Dendritic cell treated with granulocyte-macrophage colony-stimulating factor and Interleukin-4, amounts not matched to agents 40 ng/mL and 50 ng/mL, for 4 days (primary cell): ENCODE measurements at regions of chr12 and their contacts with region 1.

Region 1: GRCh38 chr12:127108360-127109215 is 1158.4 kb upstream of the TMEM132C start:
- H3K4me3 Mint-ChIP-seq: no peak overlapping the region
- H3K27ac Mint-ChIP-seq: no peak overlapping the region
- H3K4me1 Mint-ChIP-seq: no peaks in the 10 kb centered on the region
- H3K27me3 Mint-ChIP-seq: no peaks in the 10 kb centered on the region

Region 2: DNA sequence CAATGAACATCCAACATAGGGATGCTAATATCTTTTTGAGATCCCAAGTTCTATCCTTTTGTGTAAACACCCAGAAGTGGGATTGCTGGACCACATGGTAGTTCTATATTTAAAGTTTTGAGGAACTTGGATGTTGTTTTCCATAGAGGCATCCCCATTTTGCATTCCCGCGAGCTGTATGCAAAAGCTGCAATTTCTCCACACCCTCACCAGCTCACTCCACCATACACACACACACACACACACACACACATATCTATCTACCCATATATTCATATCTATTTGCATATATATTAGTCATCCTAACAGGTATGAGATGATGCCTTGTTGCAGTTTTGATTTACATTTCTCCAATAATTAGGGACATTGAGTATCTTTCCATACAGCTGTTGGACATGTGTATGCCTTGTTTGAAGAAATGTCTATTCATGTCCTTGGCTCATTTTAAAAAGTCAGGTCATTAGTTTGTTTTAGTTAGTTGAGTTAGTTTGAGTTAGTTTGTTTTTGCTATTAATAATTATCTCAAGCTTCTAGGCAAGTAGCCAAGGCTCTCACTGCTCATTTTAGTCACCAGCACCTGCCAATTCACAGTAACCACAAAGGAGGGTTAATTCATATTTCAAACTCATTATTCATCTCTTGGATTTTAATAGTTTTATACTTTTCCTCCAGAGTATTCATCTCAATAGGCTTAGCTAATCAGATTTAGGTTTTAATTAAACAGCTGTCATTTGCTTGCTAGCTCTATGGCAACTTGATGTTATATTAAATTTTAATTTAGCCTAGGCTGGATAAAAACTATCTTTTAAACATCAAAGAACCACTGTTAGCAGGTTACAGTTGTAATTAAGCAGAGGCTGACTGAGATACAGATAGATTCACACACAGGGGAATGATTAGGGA is 277.6 kb before region 1 on chr12:
- intact Hi-C with region 1: no loop called
- H3K4me3 Mint-ChIP-seq: no peak overlapping the region
- H3K27ac Mint-ChIP-seq: no peak overlapping the region
- H3K4me1 Mint-ChIP-seq: no peaks in the 10 kb centered on the region
- H3K27me3 Mint-ChIP-seq: peaks cover 1% of the 10 kb centered on the region

Region 3: GRCh38 chr12:126960709-126961108 is 147.9 kb before region 1 on chr12:
- intact Hi-C with region 1: no loop called
- H3K4me3 Mint-ChIP-seq: no peak overlapping the region
- H3K27ac Mint-ChIP-seq: no peak overlapping the region
- H3K4me1 Mint-ChIP-seq: no peaks in the 10 kb centered on the region
- H3K27me3 Mint-ChIP-seq: no peaks in the 10 kb centered on the region

Region 4: DNA sequence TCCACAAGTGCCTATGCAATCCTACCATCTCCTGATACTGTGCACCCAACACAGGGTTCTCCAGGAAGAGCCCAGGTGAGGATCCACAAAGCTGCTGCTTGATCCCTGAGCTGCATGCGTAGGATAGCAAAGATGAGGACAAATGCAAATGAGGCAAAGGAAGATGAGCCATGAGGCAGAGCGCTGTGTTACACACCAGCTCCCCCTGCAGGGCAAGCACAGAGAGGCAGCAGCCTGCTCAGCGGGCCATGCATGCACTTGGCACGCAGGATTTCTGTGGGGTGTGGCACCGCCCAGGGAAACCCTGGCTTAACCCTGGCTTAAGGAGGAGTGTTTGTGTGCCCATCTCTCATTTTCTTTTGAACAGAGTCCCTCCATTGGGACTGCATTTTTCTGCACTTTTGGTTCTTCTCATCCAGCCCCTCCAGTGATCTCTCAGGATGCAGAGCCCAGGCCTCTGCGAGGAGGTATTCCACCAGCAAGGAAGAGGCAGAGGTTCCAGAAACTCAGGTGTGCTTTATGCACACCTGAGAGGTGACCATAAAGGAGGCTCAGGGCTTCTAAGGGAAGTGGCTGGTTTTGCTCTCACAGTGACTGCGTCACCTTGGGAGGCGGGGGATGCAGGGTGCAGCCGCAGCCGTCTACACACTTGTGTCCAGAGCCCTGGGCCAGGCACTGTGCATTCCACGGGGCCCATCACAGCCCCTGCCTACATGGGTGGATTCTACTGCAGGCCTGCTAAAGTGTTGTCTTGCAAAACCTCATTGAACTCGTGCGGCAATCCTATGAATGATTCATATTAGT is 185.1 kb after region 1 on chr12:
- intact Hi-C with region 1: loop called (anchors 1 kb)
- H3K4me3 Mint-ChIP-seq: no peak overlapping the region
- H3K27ac Mint-ChIP-seq: no peak overlapping the region
- H3K4me1 Mint-ChIP-seq: no peaks in the 10 kb centered on the region
- H3K27me3 Mint-ChIP-seq: no peaks in the 10 kb centered on the region

Region 5: DNA sequence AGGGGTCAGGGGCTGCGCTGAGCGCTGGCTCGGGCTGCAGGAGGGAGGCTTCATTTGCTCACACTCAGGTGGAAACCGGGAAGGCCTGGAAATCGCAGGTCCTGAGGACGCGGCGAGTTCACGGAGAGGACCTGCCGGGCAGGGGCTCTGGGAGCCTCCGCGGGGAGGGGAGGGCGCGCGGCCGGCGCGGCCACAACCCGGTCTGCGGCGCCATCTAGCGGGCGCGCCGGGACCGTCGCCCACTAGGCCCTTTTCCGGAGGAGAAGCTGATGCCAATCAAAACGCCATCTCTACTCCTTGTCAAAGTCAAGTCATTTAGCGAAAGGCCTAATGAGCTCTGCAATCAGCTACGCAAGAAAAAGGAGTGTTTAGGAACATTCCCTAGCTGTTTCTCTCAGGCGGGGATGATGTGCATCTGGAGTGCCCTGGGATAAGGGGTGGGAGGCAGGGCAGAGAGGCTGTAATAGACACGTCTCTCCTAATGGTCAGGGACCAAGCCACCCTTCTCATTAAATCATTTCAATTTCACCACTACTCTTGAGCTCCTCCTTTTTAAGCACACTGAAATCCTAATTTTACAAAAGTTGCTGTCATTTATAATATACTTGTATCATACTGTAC is 272.6 kb after region 1 on chr12:
- intact Hi-C with region 1: loop called (anchors 1 kb)
- H3K4me3 Mint-ChIP-seq: no peak overlapping the region
- H3K27ac Mint-ChIP-seq: no peak overlapping the region
- H3K4me1 Mint-ChIP-seq: no peaks in the 10 kb centered on the region
- H3K27me3 Mint-ChIP-seq: peaks cover 3% of the 10 kb centered on the region